ENCODE measurements at regions of chr13 and their contacts with region 1.

Region 1: GRCh38 chr13:39616087-39616694 is 13.2 kb upstream of the LHFPL6 start:
- DNase-seq: peak; percentile 77 to 79
- H3K4me3 ChIP-seq: no peak overlapping the region
- H3K4me1 ChIP-seq: no peaks in the 10 kb centered on the region
- H3K27me3 ChIP-seq: no peaks in the 10 kb centered on the region

Region 2: GRCh38 chr13:39062004-39062403 is 554.2 kb before region 1 on chr13:
- in situ Hi-C with region 1: loop called (anchors 10 kb)
- DNase-seq: no peak
- H3K4me3 ChIP-seq: no peak overlapping the region
- H3K4me1 ChIP-seq: no peaks in the 10 kb centered on the region
- H3K27me3 ChIP-seq: no peaks in the 10 kb centered on the region

Region 3: DNA sequence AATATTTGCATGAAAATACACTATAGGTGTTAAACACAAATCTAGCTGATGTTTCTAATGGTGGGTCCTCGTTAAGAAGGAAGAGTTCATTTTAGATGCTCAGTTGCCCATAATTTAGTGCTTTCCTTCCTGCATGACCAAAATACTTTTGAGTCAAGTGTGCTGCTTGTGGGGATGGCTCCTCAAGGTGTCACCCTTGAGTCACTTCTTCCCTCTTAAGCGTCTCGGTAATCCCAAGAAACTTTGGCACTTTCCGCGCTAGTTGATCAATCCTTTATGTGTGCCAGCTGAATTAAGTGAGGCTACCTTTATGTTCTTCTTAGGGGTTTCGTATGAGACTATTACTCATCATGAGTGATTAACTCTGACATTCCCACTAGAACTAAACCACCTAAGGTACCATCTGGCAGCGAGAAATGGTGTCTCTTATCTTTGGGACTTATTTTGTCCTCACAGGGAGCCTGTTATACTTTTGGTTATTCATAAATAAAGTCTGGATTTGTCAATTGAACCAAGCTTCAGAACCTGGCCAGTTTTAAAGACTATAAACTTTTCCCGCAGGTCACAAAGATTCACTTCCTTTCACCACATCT is 471.2 kb before region 1 on chr13:
- in situ Hi-C with region 1: loop called (anchors 10 kb)
- DNase-seq: peak; percentile 76 to 80
- H3K4me3 ChIP-seq: no peak overlapping the region
- H3K4me1 ChIP-seq: 0 out of 2 replicates have a peak, but pooled peaks cover 3% of the 10 kb centered on the region
- H3K27me3 ChIP-seq: no peaks in the 10 kb centered on the region; the same call in 1 of the 2 replicates

Measured in HAP-1 (cell line).